MCF 10A (cell line): ENCODE measurements at regions of chr18 and their contacts with region 1.

Region 1: DNA sequence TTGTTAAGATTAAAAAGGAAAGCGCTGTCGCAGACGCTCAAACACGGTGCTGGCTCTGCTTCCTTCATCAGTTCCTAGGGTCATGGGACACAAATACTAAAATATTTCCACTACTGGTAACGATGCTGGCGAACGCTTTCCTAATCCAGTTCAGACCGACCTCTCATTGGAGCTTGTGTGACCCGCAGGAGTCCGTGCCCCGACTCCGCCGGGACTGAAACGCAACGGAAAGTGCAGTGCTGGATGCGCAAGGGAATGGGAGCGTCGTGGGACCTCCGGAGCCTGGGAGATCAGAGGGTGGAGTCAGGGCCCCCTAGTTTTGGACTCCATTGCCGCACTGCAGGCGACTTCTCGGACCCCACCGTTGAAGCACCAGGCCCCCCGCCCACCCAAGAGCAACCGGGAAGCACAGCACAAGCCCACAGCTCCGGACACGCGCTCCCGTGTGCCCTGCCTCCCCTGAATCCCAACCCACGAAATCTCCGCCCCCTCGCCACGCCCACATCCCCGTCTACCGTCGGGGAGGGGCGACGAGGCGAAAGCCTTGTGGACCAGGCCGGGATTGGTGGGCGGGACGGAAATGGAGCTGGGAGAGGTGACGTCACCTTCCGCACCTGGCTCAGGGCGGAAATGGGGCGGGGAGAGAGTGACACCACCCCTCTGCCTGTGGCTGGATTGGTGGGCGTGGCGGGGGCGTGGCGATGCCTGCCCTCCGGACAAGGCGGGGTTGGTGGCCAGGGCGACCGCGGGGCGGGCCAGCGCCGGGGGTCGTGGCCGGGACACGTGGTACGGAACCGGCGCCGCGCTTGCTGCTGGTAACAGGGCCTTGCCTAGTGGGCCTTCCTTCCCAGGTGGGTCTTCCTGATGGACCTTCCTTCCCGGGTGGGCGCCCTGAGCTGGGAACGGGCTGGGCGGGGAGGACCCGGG is at the start of gene CNDP2:
- DNase-seq: peak; percentile 99
- H3K4me3 Mint-ChIP-seq: peak within 1 kb of the TSS; percentile 88
- H3K27ac Mint-ChIP-seq: peak within 1 kb of the TSS; percentile 88
- H3K4me1 Mint-ChIP-seq: peaks cover 22% of the 10 kb centered on the region
- H3K27me3 Mint-ChIP-seq: no peaks in the 10 kb centered on the region
- CTCF ChIP-seq: no peak
- total RNA-seq, gene CNDP2: 194 and 219 TPM in 2 replicates

Region 2: GRCh38 chr18:74291771-74292540 is 203.9 kb before region 1 on chr18 and contains the start of gene CYB5A:
- CTCF ChIA-PET with region 1: no interaction called
- POLR2A ChIA-PET with region 1: interaction called, 4 read pairs
- intact Hi-C with region 1: loop called (anchors 5 kb)
- DNase-seq: peak; percentile 95
- H3K4me3 Mint-ChIP-seq: peak within 1 kb of the TSS; percentile 96
- H3K27ac Mint-ChIP-seq: peak within 1 kb of the TSS; percentile 65
- H3K4me1 Mint-ChIP-seq: peaks cover 4% of the 10 kb centered on the region
- H3K27me3 Mint-ChIP-seq: no peaks in the 10 kb centered on the region
- CTCF ChIP-seq: peak; percentile 28
- total RNA-seq, gene CYB5A: 19.4 and 27.5 TPM in 2 replicates

Region 3: GRCh38 chr18:74353169-74353775 is 142.6 kb before region 1 on chr18:
- CTCF ChIA-PET with region 1: interaction called, 234 read pairs
- POLR2A ChIA-PET with region 1: interaction called, 15 read pairs
- intact Hi-C with region 1: loop called (anchors 1 kb)
- DNase-seq: peak; percentile 61
- H3K4me3 Mint-ChIP-seq: no peak overlapping the region
- H3K27ac Mint-ChIP-seq: no peak overlapping the region
- H3K4me1 Mint-ChIP-seq: no peaks in the 10 kb centered on the region
- H3K27me3 Mint-ChIP-seq: peaks cover 40% of the 10 kb centered on the region
- CTCF ChIP-seq: peak; percentile 55

Region 4: DNA sequence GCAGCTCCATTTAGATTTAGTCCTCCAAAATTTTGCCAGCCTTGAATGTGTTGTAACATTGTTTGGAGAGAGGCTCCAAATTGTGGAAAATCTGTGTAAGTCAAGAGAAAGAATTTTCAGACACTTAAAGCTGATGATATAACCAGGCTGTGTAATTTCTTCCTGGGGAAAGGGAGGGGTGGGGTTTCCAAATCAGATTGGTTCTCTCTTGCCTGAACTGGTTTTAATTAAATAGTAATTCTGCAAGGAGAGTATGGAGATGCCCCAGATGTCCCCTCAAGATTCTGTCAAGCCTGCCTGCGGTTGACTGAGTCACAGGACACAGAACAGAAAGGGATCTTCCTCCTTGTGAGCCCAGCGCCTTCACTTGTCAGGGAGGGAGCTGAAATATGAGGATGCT is 125.7 kb before region 1 on chr18:
- CTCF ChIA-PET with region 1: interaction called, 13 read pairs
- POLR2A ChIA-PET with region 1: no interaction called
- intact Hi-C with region 1: no loop called
- DNase-seq: no peak
- H3K4me3 Mint-ChIP-seq: no peak overlapping the region
- H3K27ac Mint-ChIP-seq: no peak overlapping the region
- H3K4me1 Mint-ChIP-seq: no peaks in the 10 kb centered on the region
- H3K27me3 Mint-ChIP-seq: peaks cover 40% of the 10 kb centered on the region
- CTCF ChIP-seq: no peak

Region 5: DNA sequence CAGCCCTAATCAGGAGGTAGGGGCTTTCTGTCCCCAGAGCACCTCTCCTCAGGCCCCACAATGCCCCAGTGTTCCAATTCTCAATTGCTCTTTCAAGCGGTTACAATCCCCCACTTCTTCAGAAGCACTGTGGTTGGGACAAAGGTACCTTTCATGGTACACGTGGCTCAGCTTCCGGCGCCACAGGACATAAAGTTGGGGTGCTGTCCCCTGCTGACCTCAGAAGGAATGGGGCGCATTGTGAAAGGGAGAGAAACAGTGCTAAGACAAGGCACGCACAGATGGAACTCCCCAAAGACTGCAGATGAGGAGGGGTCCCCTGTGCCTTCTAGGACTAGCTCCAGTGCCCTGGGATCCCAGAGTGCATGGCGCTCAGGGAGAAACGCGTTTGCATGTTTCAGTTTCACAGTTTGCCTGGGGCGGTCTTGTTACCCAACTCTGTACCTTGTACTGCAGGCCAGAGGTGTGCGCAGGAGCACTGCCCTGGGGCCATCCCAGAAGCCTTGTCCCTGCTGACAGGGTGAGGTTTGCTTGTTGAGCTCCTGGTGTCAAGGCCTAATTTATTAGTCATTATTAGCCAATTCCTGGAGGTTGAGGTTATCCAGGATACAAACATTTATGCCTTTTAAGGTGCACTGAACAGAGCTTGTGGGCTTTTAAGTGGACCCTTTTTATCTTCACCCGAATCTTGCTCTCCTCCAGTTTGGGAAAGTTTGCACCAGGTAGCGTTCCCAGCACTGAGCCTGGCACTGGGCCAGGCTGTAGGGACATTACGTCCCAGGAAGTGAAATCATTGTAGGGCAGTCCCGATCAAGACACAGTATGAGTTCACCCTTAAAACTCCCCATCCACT is 46.1 kb after region 1 on chr18:
- CTCF ChIA-PET with region 1: interaction called, 6 read pairs
- POLR2A ChIA-PET with region 1: interaction called, 37 read pairs
- intact Hi-C with region 1: loop called (anchors 2 kb)
- DNase-seq: peak; percentile 55
- H3K4me3 Mint-ChIP-seq: peak overlapping the region; percentile 61
- H3K27ac Mint-ChIP-seq: peak overlapping the region; percentile 67
- H3K4me1 Mint-ChIP-seq: peaks cover 19% of the 10 kb centered on the region
- H3K27me3 Mint-ChIP-seq: no peaks in the 10 kb centered on the region
- CTCF ChIP-seq: no peak

Region 6: DNA sequence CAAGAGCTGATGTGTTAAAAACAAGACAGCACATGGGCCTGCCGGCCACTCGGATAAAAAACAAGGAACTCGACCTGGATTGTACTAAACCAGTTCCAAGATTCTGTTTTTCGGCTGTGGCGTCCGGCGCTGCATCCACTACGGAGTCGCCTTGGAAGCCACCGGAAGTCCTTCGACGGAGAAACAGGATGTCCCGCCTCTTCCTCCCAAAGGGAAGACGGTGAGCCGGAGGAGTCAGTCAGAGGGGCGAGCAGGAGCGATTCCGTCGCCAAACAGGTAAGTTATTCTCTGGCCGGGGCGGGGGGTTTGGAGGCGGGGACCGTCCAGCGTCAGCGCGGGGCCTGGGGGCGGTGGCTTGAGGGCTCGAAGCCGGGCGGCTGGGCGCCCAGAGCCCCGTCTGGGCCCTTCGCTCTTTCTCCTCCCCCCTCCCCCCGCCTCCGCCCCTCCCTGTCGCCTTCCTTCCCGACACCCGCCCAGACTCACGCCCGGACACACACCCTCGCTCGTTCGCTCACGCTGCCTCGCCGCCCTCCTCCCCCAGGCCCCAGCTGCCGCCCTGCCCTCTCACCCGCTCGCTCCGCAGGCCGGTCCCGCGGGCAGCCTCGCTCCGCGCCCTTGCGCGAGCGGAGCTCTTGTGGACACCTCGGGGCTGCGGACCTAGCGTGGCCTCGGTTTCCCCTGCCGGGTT is 102.0 kb after region 1 on chr18 and contains the start of gene ZNF407:
- CTCF ChIA-PET with region 1: no interaction called
- POLR2A ChIA-PET with region 1: interaction called, 17 read pairs
- intact Hi-C with region 1: loop called (anchors 1 kb)
- DNase-seq: peak; percentile 93
- H3K4me3 Mint-ChIP-seq: peak within 1 kb of the TSS; percentile 85
- H3K27ac Mint-ChIP-seq: peak within 1 kb of the TSS; percentile 99
- H3K4me1 Mint-ChIP-seq: no peaks in the 10 kb centered on the region
- H3K27me3 Mint-ChIP-seq: no peaks in the 10 kb centered on the region
- CTCF ChIP-seq: no peak
- total RNA-seq, gene ZNF407: 9.5 and 9.9 TPM in 2 replicates

Region 7: DNA sequence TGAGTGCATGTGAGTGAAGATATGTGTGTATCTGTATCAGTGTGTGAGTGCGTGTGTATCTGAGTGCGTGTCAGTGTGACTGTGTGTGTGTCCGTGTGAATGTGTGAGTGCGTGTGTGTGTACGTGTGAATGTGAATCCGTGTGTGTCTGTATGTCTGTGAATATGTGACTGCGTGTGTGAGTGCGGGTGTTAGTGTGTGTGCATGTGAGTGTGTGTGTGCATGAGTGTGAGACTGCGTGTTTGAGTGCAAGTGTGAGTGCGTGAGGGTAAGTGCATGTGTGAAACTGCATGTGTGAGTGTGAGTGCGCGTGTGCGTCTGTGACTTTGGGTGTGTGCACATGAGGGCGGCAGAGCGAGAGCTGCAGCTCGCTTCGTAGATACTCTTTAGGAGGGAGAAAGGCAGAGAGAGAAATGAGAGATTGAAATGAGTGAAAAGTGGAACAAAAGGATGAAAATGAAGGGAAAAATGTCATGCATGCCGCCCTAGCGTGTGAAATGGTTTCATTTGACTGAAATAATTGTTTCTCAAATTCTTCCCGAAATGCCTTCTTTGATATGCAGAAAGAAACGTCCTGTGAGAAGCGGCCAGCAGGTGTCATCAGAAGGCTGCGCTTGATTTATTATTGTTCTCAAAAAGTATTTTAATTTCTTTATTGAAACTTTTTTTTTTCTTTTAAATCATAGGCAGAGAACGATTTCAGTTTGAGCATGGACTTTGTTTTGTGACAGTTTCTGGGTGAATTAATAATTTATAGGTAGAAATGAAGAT is 127.4 kb after region 1 on chr18:
- CTCF ChIA-PET with region 1: no interaction called
- POLR2A ChIA-PET with region 1: no interaction called
- intact Hi-C with region 1: no loop called
- DNase-seq: peak; percentile 10
- H3K4me3 Mint-ChIP-seq: no peak overlapping the region
- H3K27ac Mint-ChIP-seq: no peak overlapping the region
- H3K4me1 Mint-ChIP-seq: no peaks in the 10 kb centered on the region
- H3K27me3 Mint-ChIP-seq: no peaks in the 10 kb centered on the region
- CTCF ChIP-seq: no peak